ENCODE measurements at regions of chr1 and their contacts with region 1.

Region 1: GRCh38 chr1:27603681-27604578 is at the start of gene AHDC1:
- DNase-seq: peak; percentile 96
- ATAC-seq: peak; percentile 77
- H3K4me3 Mint-ChIP-seq: peak within 1 kb of the TSS; percentile 91
- H3K27ac Mint-ChIP-seq: peak within 1 kb of the TSS; percentile 70
- H3K4me1 Mint-ChIP-seq: peaks cover 36% of the 10 kb centered on the region
- H3K27me3 Mint-ChIP-seq: no peaks in the 10 kb centered on the region
- total RNA-seq, gene AHDC1: 10.3 to 12.1 TPM

Region 2: GRCh38 chr1:27332536-27333281 is 271.2 kb before region 1 on chr1:
- CTCF ChIA-PET with region 1: interaction called, 10 read pairs
- POLR2A ChIA-PET with region 1: interaction called, 3 read pairs
- intact Hi-C with region 1: loop called in 1 of 2 experiments (anchors 10 kb)
- DNase-seq: peak; percentile 72
- ATAC-seq: peak; percentile 91
- H3K4me3 Mint-ChIP-seq: no peak overlapping the region
- H3K27ac Mint-ChIP-seq: no peak overlapping the region
- H3K4me1 Mint-ChIP-seq: peaks cover 27% of the 10 kb centered on the region
- H3K27me3 Mint-ChIP-seq: no peaks in the 10 kb centered on the region

Region 3: DNA sequence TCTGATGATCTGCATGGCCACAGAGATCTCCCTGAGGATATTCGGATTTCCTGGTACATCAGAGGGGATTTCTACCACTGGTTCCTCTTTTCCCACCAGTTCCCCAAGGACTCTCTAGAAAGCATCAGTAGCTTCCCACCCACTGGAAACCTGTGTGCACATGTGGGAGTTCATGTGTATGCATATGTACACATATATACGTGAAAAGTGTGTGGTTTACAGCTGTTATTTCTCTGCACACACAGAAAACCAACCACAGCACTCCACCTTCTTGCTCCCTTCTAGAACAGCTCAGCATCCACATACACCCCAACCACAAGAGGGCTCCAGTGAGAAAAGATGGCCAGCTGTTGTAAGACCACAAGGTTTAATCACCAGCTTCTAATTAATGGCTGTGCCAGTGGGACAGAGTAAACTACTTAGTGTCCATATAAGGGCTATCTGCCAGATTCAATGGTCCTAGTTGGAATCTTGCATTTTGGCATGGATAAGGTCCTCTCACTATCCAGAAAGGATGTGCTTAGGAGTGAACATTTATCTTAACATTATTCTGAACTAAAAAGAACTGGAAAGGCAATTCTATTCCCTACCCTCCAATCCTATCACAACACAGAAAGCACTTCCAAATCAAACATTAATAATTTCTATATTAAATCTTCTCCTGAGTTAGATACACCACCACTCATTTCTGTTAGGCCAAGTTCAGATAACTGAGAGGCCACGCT is 187.4 kb before region 1 on chr1:
- CTCF ChIA-PET with region 1: interaction called, 10 read pairs
- POLR2A ChIA-PET with region 1: interaction called, 3 read pairs
- intact Hi-C with region 1: loop called (anchors 1 to 2 kb)
- DNase-seq: peak; percentile 69
- ATAC-seq: peak; percentile 64
- H3K4me3 Mint-ChIP-seq: no peak overlapping the region
- H3K27ac Mint-ChIP-seq: peak overlapping the region; percentile 40
- H3K4me1 Mint-ChIP-seq: peaks cover 40% of the 10 kb centered on the region
- H3K27me3 Mint-ChIP-seq: no peaks in the 10 kb centered on the region

Region 4: GRCh38 chr1:27556781-27557595 is 46.9 kb before region 1 on chr1:
- CTCF ChIA-PET with region 1: interaction called, 29 read pairs
- POLR2A ChIA-PET with region 1: interaction called, 4 read pairs
- intact Hi-C with region 1: loop called (anchors 1 kb)
- DNase-seq: peak; percentile 85
- ATAC-seq: peak; percentile 84
- H3K4me3 Mint-ChIP-seq: no peak overlapping the region
- H3K27ac Mint-ChIP-seq: peak overlapping the region; percentile 47
- H3K4me1 Mint-ChIP-seq: peaks cover 21% of the 10 kb centered on the region
- H3K27me3 Mint-ChIP-seq: no peaks in the 10 kb centered on the region

Region 5: GRCh38 chr1:27671964-27672749 is 68.2 kb after region 1 on chr1 and contains the start of gene IFI6:
- CTCF ChIA-PET with region 1: interaction called, 11 read pairs
- POLR2A ChIA-PET with region 1: no interaction called
- intact Hi-C with region 1: no loop called
- DNase-seq: peak; percentile 88
- ATAC-seq: peak; percentile 91
- H3K4me3 Mint-ChIP-seq: peak within 1 kb of the TSS; percentile 83
- H3K27ac Mint-ChIP-seq: peak within 1 kb of the TSS; percentile 89
- H3K4me1 Mint-ChIP-seq: peaks cover 31% of the 10 kb centered on the region
- H3K27me3 Mint-ChIP-seq: no peaks in the 10 kb centered on the region
- total RNA-seq, gene IFI6: 41.8 to 62.5 TPM

Region 6: DNA sequence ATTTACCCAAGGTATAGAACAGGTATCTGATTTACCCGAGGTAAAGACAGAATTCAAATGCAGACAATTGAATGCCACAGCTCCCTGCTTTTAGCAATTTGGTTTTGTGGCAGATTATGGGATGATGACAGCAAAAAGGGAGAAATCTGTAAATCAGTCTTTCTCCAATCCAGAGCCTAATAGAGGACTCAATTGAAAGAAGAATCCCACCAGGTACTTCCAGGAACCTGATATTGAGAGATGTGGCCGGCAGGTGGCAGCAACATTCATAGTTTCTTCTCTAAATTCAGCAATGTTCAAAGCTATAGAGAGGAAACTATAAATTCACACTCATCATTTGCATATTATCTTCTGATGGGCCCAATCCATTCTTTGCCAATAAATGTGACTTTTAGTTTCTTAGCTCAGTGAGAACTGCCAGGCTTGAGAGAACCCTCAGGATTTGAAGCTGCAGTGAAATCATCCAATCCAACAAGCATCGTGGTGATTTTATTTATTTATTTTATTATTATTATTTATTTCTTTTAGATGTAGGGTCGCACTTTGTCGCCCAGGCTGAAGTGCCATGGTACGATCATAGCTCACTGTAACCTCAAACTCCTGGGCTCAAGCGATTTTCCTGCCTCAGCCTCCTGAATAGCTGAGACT is 755.8 kb after region 1 on chr1:
- CTCF ChIA-PET with region 1: no interaction called
- POLR2A ChIA-PET with region 1: no interaction called
- intact Hi-C with region 1: no loop called
- DNase-seq: peak; percentile 88
- ATAC-seq: peak; percentile 78
- H3K4me3 Mint-ChIP-seq: no peak overlapping the region
- H3K27ac Mint-ChIP-seq: no peak overlapping the region
- H3K4me1 Mint-ChIP-seq: no peaks in the 10 kb centered on the region
- H3K27me3 Mint-ChIP-seq: no peaks in the 10 kb centered on the region